ENCODE measurements at regions of chr11 and their contacts with region 1.

Region 1: GRCh38 chr11:126122863-126123262 is 60.2 kb upstream of the CDON start:
- DNase-seq: no peak
- H3K4me3 Mint-ChIP-seq: no peak overlapping the region
- H3K27ac Mint-ChIP-seq: no peak overlapping the region
- H3K4me1 Mint-ChIP-seq: no peaks in the 10 kb centered on the region
- H3K27me3 Mint-ChIP-seq: no peaks in the 10 kb centered on the region

Region 2: DNA sequence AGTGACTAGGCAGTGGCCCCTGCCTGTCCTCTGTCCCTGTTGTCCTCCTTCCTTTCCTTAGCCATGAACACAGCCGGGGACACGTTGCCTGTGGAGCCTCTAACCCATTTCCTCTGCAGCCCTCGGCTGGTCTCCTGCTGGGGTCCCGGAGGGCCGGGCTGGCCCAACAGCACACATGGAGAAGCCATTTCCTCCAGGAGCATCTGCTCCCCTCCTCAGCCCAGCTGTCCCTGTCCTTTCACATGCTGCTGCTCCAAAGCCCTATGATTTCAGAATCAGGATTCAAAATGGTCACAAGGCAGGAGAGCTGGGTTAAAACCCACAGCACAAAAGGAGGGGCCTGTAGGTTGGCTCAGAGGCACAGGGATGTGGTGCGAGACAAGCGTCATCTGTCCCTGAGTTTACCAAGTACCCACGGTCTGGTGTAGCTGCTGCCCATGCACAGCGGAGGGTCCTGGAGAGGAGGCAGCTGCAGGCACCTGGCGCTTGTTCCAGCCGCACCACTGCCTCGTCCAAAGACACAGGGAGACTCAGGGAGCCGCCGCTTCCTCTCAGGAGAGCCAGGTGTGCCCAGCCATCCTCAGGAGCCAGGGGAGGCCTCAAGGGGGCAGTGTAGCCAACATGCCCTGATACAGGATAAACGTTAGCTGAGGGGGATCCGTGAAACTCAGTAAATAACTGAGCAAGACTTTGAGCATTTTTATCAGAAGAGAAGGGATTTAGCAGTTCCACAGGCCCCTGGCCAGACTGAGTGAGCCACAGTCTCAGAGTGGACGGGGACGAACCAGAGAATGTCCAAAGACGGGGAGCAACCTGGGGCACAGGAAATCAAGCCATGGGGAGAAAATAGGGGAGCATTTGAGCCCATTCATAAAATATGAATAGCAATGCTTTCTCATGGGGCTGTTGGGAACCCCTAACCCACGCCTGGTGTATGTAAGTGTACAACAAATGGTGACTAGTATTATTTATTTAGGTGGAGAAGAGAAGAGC is 180.9 kb before region 1 on chr11:
- CTCF ChIA-PET with region 1: interaction called, 6 read pairs
- intact Hi-C with region 1: loop called (anchors 1 kb)
- DNase-seq: peak; percentile 79
- H3K4me3 Mint-ChIP-seq: no peak overlapping the region
- H3K27ac Mint-ChIP-seq: no peak overlapping the region
- H3K4me1 Mint-ChIP-seq: peaks cover 15% of the 10 kb centered on the region
- H3K27me3 Mint-ChIP-seq: no peaks in the 10 kb centered on the region